Motor neuron (in vitro differentiated cells): ENCODE measurements at regions of chr9 and their contacts with region 1.

Region 1: GRCh38 chr9:126781186-126782052 is 23.4 kb upstream of the ZBTB43 start:
- ATAC-seq: peak; percentile 90 to 99 (median 96)
- H3K4me3 ChIP-seq: no peak overlapping the region
- H3K27ac ChIP-seq: no peak overlapping the region
- H3K4me1 ChIP-seq: no peaks in the 10 kb centered on the region

Region 2: GRCh38 chr9:126500684-126501382 is 280.6 kb before region 1 on chr9:
- in situ Hi-C with region 1: loop called in 3 of 9 experiments (anchors 25 kb)
- ATAC-seq: peak; percentile 61 to 86 (median 81)
- H3K4me3 ChIP-seq: no peak overlapping the region
- H3K27ac ChIP-seq: no peak overlapping the region
- H3K4me1 ChIP-seq: peaks cover 4 to 10% of the 10 kb centered on the region in 2 donors

Region 3: DNA sequence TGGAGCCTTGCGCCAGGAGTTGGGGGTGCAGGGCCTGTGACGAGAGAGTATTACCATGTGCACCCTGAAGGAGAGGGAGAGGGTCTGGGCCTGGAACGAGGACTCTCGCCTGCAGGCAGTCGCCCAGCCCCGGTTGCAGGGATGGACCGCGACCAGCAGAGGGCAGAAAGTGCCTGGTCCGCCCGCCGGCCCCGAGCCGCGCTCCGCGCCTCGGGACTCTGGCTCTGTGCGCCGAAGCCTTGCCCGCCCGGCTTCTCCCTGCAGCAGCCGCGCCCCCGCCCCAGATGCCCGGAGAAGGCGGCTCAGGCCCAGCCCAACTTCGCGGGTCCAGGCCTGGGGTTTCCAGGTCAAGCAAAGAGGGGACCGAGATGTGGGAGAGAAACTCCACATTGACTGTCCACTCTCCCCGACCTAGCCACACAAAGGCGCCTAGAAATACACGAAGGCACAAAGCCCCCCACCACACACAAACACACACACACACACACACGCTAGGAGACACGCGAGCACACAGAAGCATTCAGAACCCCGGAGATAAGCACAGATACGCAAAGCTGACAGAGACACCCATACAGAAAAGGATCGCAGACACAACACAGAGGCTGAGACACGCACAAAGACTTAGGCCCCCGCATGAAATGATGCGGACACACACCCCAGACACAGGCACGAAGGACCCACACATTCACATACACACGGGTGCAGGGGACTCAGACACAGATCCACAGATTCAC is 169.7 kb before region 1 on chr9:
- in situ Hi-C with region 1: loop called in 7 of 9 experiments (anchors 10 to 25 kb)
- ATAC-seq: peak; percentile 76 to 92 (median 82)
- H3K4me3 ChIP-seq: no peak overlapping the region
- H3K27ac ChIP-seq: no peak overlapping the region
- H3K4me1 ChIP-seq: no peaks in the 10 kb centered on the region

Region 4: DNA sequence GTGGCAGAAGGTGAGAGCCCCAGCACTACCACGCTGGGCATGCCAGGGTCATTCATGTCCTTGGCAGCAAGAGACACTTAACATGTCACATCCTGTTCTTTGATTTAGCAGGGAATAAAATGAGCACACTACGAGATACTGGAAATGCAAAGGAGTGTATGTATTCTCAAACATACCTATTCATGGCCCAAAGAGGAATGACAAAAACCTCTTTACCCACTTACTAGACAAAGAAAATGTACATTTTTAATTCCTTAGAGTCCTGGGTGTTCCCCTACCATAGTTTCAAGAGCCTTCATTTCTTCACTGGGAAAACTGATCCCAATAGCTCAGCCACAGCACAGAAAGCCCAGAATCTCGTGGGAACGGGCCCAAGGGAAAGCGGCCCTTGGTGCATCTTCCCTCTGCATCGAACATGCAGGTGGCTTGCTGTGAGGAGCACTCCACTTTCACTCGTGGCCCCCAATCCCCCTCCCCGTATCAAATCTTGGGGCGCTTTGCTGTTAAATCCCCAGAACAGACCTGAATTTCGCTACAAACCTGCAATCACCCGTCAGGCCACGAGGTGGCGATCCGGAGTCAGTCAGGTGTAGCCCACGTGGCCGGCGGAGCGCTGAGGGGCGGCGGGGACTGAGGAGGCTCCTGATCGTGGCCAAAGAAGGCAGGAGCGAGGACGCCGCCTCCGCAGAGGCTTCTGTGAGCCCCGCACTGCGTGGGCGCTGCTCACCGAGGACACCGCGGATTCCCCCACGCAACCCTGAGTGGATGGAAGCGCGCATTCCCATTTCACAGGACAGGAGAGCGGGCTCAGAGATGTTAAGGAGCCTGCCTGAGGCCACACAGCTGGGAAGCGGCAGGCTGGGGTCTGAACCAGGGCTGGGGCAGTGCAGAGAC is 76.3 kb before region 1 on chr9:
- in situ Hi-C with region 1: loop called in 2 of 9 experiments (anchors 10 kb)
- ATAC-seq: peak; percentile 55 to 77 (median 68)
- H3K4me3 ChIP-seq: no peak overlapping the region
- H3K27ac ChIP-seq: no peak overlapping the region
- H3K4me1 ChIP-seq: peaks cover 0 to 4% of the 10 kb centered on the region in 2 donors